Panc1 (cell line): ENCODE measurements at regions of chr3 and their contacts with region 1.

Region 1: DNA sequence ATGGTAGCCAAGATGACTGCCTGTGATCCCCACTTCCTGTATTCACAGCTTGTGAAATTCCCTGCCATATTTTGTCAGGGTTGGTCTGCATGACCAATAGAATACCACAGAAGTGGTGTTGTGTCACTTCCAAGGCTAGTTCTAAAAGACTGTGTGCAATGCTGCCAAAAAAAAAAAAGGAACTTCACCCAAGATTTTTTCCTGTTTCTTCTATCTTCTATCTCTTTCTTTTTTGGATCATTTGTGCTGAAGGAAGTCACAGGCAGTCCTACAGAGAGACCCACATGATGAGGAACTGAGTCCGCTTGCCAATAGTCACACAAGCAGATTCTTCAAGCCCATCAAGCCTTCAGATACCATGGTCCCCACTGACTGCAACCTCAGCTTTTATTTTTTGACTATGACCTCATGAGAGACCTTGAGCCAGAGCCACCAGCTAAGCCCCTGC is 18.1 kb upstream of the RAF1 start:
- DNase-seq: no peak
- ATAC-seq: no peak
- H3K4me3 ChIP-seq: no peak overlapping the region
- H3K27ac ChIP-seq: no peak overlapping the region
- H3K4me1 ChIP-seq: peaks cover 8% of the 10 kb centered on the region
- H3K27me3 ChIP-seq: no peaks in the 10 kb centered on the region
- CTCF ChIP-seq: no peak

Region 2: DNA sequence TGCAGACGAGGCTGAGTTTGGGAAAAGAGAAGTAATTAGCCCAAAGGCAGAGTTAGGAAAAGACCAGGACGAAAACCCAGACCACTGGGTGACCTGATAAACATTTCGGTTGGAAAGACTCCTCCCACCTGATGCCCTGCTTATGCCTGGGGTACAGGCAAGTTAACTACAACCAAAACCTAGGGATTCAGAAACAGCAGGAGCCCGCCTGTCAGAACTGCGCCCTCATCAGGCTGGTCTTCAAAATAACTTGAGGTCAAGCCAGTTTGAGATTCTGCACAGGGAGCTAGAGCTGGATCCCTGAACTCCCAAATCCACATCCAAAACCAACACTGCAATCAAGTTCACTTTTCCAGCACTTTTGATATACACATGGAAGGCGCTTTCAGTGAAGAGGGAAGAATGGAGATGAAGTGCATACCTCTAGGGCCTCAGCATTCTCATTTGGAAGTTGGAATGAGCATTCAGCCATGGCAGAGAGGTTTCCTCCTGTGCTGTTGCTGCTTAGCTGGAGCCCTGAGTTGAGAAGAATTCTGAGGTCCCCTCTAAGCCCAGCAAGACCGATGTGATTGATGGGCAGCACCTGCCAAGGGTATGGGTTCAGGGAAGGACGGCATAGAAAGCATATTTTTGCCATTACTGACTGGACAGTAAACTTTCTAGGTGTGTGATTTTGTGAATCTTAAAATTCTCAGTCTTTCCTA is 186.1 kb before region 1 on chr3:
- CTCF ChIA-PET with region 1: no interaction called
- POLR2A ChIA-PET with region 1: interaction called, 12 read pairs
- in situ Hi-C with region 1: no loop called
- intact Hi-C with region 1: no loop called
- DNase-seq: no peak
- ATAC-seq: no peak
- H3K4me3 ChIP-seq: no peak overlapping the region
- H3K27ac ChIP-seq: no peak overlapping the region
- H3K4me1 ChIP-seq: no peaks in the 10 kb centered on the region
- H3K27me3 ChIP-seq: no peaks in the 10 kb centered on the region
- CTCF ChIP-seq: no peak; the same call in 1 of the 2 replicates

Region 3: GRCh38 chr3:12812812-12813211 is 130.8 kb after region 1 on chr3:
- CTCF ChIA-PET with region 1: no interaction called
- POLR2A ChIA-PET with region 1: interaction called, 20 read pairs
- in situ Hi-C with region 1: no loop called
- intact Hi-C with region 1: no loop called
- DNase-seq: no peak
- ATAC-seq: no peak
- H3K4me3 ChIP-seq: no peak overlapping the region
- H3K27ac ChIP-seq: no peak overlapping the region
- H3K4me1 ChIP-seq: peaks cover 4% of the 10 kb centered on the region; the same call in 1 of the 2 replicates
- H3K27me3 ChIP-seq: no peaks in the 10 kb centered on the region
- CTCF ChIP-seq: no peak